T-cell (primary cell): ENCODE measurements at regions of chr20 and their contacts with region 1.

Region 1: DNA sequence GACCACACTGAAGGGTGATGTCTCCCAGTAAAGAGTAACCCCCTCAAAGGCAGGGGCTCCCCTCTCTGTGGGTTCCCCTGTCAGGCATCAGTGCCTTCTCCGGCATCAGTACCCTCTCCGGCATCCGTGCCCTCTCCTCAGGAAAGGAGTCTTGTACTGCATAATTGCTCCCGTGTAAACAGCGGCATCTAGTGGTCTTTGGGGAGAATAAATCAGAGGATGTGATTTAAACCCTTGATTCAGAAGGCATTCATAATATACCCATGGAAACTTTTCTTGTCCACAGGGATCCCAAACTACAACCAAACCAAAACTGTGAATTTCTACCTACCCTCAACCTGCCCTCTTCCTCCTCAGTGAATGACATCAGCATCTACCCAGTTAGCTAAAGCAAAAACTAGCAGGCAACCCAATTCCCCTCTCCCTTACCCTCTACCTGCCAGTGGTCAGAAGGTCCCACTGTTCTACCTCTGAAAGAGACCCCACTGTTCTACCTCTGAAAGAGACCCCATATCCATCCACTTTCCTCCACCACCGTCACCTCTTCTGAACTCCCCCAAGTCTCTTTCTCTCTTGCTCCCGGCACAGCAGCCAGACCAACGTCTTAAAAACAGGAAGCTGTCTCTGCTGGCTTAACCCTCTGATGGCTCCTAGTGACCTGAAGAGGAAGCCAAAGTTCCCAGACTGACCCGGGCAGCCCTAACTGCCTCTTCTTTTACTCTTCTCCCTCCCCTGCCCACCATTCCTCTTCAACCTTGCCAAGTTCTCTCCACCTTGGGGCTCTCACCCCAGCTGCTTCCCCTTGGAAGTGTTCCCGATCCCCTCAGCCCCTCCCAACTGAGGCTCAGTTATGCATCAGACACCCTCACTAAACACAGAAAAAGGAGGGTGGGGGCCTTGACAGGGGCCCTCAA is 27.2 kb downstream of the UBE2V1 start:
- DNase-seq: peak in 27 of 35 experiments; percentile 4 to 74 (median 23)
- ATAC-seq: peak; percentile 82 to 86 (median 84)
- H3K4me3 ChIP-seq: peak overlapping the region; percentile 21 to 39
- H3K4me3 Mint-ChIP-seq: peak overlapping the region; percentile 77 to 81 (median 77)
- H3K27ac ChIP-seq: peak overlapping the region; percentile 1
- H3K27ac Mint-ChIP-seq: peak overlapping the region; percentile 82 to 93
- H3K4me1 ChIP-seq: peaks cover 7 to 17% of the 10 kb centered on the region in 2 experiments
- H3K4me1 Mint-ChIP-seq: peaks cover 37 to 38% (median 38%) of the 10 kb centered on the region in 3 donors
- H3K27me3 ChIP-seq: no peaks in the 10 kb centered on the region
- H3K27me3 Mint-ChIP-seq: no peaks in the 10 kb centered on the region

Region 2: GRCh38 chr20:50070991-50071888 is 14.5 kb before region 1 on chr20:
- CTCF ChIA-PET with region 1: interaction called, 4 to 21 read pairs
- POLR2A ChIA-PET with region 1: no interaction called
- DNase-seq: peak; percentile 63 to 95 (median 84)
- ATAC-seq: peak; percentile 98 to 100 (median 100)
- H3K4me3 ChIP-seq: peak overlapping the region; percentile 24 to 38
- H3K4me3 Mint-ChIP-seq: peak overlapping the region; percentile 53 to 68 (median 66)
- H3K27ac ChIP-seq: no peak overlapping the region
- H3K27ac Mint-ChIP-seq: no peak overlapping the region
- H3K4me1 ChIP-seq: peaks cover 2 to 12% of the 10 kb centered on the region in 2 experiments
- H3K4me1 Mint-ChIP-seq: peaks cover 2 to 7% (median 4%) of the 10 kb centered on the region in 3 donors
- H3K27me3 ChIP-seq: peaks cover 0 to 13% of the 10 kb centered on the region in 2 experiments
- H3K27me3 Mint-ChIP-seq: no peaks in the 10 kb centered on the region